K562 (cell line): ENCODE measurements at regions of chr6 and their contacts with region 1.

Region 1: DNA sequence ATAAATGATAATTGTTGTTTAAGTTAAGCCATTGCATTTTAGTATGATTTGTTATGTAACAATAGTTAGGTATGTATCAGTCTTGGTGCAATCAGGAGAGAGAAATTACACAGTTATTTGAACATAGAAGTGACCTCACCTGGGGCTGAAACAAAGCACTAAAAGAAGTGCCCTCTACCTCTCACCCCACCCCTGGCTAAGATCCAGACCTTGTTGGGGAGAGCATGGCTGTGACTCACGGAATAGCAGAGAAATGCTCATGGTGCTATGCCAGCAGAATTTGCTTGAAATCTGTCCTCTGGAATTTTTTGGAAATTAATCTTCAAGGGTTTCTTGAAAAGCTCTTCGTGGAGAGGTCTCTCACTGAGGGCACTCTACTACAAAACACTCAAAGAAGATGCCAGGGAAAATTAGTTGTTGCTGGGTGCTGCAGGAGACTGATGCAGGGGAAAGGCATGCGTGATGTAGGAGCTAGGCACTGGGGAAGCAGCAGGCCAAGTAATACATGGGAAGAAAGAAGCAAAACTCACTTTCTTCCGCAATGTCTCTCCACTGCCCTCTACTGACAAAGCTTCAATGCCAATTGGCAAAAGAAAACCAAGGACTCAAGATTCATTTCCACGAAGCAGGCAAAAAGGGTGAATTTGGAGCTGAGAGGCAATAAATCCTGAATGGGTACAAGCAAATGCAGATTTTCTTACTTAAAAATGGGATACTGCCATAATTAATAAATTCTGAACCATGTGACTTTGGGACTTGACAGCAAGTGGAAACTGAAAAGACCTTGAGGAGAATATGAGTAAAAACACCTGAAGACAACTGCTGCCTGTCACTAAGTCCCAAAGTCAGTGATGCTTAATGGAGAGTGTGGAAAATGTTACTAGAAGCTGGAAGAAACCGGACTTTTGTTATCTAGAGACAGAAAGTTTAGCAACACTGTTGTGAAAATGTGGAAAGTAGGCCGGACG is 136.3 kb upstream of the ZNF184 start:
- DNase-seq: peak in 3 of 4 experiments; percentile 34 to 86 (median 56)
- ATAC-seq: peak; percentile 62
- H3K4me3 ChIP-seq: no peak overlapping the region
- H3K27ac ChIP-seq: no peak overlapping the region
- H3K4me1 ChIP-seq: peaks cover 1 to 13% of the 10 kb centered on the region in 2 experiments; a peak in 4 of 5 replicates
- H3K27me3 ChIP-seq: no peaks in the 10 kb centered on the region
- CTCF ChIP-seq: peak; percentile 80 to 95 (median 88)
- EP300 ChIP-seq: peak; percentile 30; the same call in 1 of the 2 replicates
- POLR2A ChIP-seq: no peak
- RAD21 ChIP-seq: peak; percentile 81 to 92

Region 2: GRCh38 chr6:27188885-27189418 is 420.2 kb before region 1 on chr6:
- CTCF ChIA-PET with region 1: no interaction called
- POLR2A ChIA-PET with region 1: no interaction called
- in situ Hi-C with region 1: no loop called
- intact Hi-C with region 1: loop called (anchors 2 kb)
- DNase-seq: peak; percentile 69 to 93 (median 78)
- ATAC-seq: peak; percentile 85
- H3K4me3 ChIP-seq: peak overlapping the region; percentile 56
- H3K27ac ChIP-seq: peak overlapping the region; percentile 80
- H3K4me1 ChIP-seq: peaks cover 8% of the 10 kb centered on the region in 2 experiments; a peak in 4 of 5 replicates
- H3K27me3 ChIP-seq: no peaks in the 10 kb centered on the region
- CTCF ChIP-seq: peak; percentile 78 to 92 (median 85)
- EP300 ChIP-seq: no peak; the same call in 1 of the 2 replicates
- POLR2A ChIP-seq: no peak
- RAD21 ChIP-seq: peak; percentile 93 to 95

Region 3: GRCh38 chr6:27479319-27480182 is 129.6 kb before region 1 on chr6:
- CTCF ChIA-PET with region 1: no interaction called
- POLR2A ChIA-PET with region 1: no interaction called
- in situ Hi-C with region 1: no loop called
- intact Hi-C with region 1: loop called (anchors 5 kb)
- DNase-seq: peak; percentile 57 to 89 (median 66)
- ATAC-seq: peak; percentile 76
- H3K4me3 ChIP-seq: peak overlapping the region; percentile 64
- H3K27ac ChIP-seq: peak overlapping the region; percentile 85
- H3K4me1 ChIP-seq: peaks cover 4 to 8% of the 10 kb centered on the region in 2 experiments; a peak in 2 of 5 replicates
- H3K27me3 ChIP-seq: no peaks in the 10 kb centered on the region
- CTCF ChIP-seq: 0 out of 6 replicates have a peak, but pooled peaks of 1 of the 3 experiments have one; percentile 5
- EP300 ChIP-seq: peak; percentile 34
- POLR2A ChIP-seq: peak; percentile 54; the same call in 1 of the 2 replicates
- RAD21 ChIP-seq: no peak; a peak in 2 of 4 replicates

Region 4: DNA sequence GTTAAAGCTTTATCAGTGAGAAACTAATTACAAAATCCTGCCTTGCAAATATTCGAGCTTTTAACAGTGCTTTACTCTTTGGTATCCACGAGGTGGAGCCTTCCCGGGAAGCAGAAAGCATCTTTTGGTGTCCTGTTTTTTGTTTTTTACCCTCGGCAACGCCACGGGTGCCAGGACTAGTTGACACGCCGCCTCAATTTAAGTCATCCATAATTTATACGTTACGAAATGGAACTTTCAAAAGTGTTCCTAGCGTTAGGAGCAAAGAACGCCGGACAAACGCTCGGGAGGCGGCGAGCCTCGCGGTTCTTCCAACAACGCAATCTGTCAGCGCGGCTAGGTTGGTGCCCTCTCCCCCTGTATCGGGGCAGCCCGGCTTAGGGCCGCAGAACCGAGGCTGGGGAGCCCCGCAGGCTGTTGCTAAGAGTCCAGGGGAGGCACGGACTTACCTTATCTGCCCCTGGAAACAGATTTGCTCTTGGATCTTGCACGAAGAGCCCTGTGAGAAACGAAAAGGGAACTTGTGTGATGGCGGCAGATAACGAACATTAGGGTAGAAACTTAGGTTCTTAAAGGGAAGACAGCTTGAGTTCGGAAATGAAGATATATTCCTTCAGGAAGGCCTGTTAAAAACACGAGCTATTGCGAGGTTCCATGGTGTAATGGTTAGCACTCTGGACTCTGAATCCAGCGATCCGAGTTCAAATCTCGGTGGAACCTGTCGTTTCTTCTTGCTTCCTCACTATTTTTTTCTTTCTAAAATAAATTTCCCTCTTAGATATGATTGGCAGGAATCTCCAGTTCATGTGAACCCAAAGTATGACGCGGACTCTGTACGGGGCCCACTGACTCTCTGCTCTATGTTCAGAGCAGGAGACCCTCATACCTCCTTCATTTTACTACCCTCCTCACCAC is 90.1 kb before region 1 on chr6:
- CTCF ChIA-PET with region 1: interaction called, 12 read pairs
- POLR2A ChIA-PET with region 1: interaction called, 8 read pairs
- in situ Hi-C with region 1: loop called (anchors 5 kb)
- intact Hi-C with region 1: no loop called
- DNase-seq: peak; percentile 66 to 93 (median 69)
- ATAC-seq: peak; percentile 89
- H3K4me3 ChIP-seq: peak overlapping the region; percentile 69
- H3K27ac ChIP-seq: peak overlapping the region; percentile 82
- H3K4me1 ChIP-seq: peaks cover 4 to 7% of the 10 kb centered on the region in 2 experiments; a peak in 3 of 5 replicates
- H3K27me3 ChIP-seq: no peaks in the 10 kb centered on the region
- CTCF ChIP-seq: peak; percentile 77 to 90 (median 86)
- EP300 ChIP-seq: peak; percentile 63
- POLR2A ChIP-seq: peak; percentile 66
- RAD21 ChIP-seq: peak; percentile 76 to 80

Region 5: GRCh38 chr6:27553123-27553904 is 55.9 kb before region 1 on chr6:
- CTCF ChIA-PET with region 1: no interaction called
- POLR2A ChIA-PET with region 1: interaction called, 11 read pairs
- in situ Hi-C with region 1: no loop called
- intact Hi-C with region 1: no loop called
- DNase-seq: peak; percentile 69 to 94 (median 77)
- ATAC-seq: peak; percentile 83
- H3K4me3 ChIP-seq: peak overlapping the region; percentile 52
- H3K27ac ChIP-seq: peak overlapping the region; percentile 93
- H3K4me1 ChIP-seq: 0 out of 5 replicates have a peak, but pooled peaks cover 0 to 11% of the 10 kb centered on the region in 2 experiments
- H3K27me3 ChIP-seq: no peaks in the 10 kb centered on the region
- CTCF ChIP-seq: 0 out of 6 replicates have a peak, but pooled peaks of 1 of the 3 experiments have one; percentile 1
- EP300 ChIP-seq: peak; percentile 79
- POLR2A ChIP-seq: no peak
- RAD21 ChIP-seq: peak; percentile 16 to 27; a peak in 1 of 4 replicates

Region 6: GRCh38 chr6:27630727-27631608 is 21.8 kb after region 1 on chr6:
- CTCF ChIA-PET with region 1: no interaction called
- POLR2A ChIA-PET with region 1: interaction called, 11 read pairs
- in situ Hi-C with region 1: no loop called
- intact Hi-C with region 1: no loop called
- DNase-seq: peak; percentile 79 to 94 (median 83)
- ATAC-seq: peak; percentile 99
- H3K4me3 ChIP-seq: peak overlapping the region; percentile 57
- H3K27ac ChIP-seq: peak overlapping the region; percentile 71
- H3K4me1 ChIP-seq: peaks cover 8 to 10% of the 10 kb centered on the region in 2 experiments; a peak in 4 of 5 replicates
- H3K27me3 ChIP-seq: no peaks in the 10 kb centered on the region
- CTCF ChIP-seq: peak; percentile 55 to 64 (median 63); a peak in 5 of 6 replicates
- EP300 ChIP-seq: peak; percentile 76
- POLR2A ChIP-seq: no peak
- RAD21 ChIP-seq: 0 out of 4 replicates have a peak, but pooled peaks have one; percentile 2 to 14

Region 7: GRCh38 chr6:28371706-28372451 is 762.7 kb after region 1 on chr6:
- CTCF ChIA-PET with region 1: no interaction called
- POLR2A ChIA-PET with region 1: no interaction called
- in situ Hi-C with region 1: no loop called
- intact Hi-C with region 1: no loop called
- DNase-seq: peak in 2 of 4 experiments; percentile 34 to 58
- ATAC-seq: peak; percentile 71
- H3K4me3 ChIP-seq: no peak overlapping the region
- H3K27ac ChIP-seq: no peak overlapping the region
- H3K4me1 ChIP-seq: peaks cover 3 to 14% of the 10 kb centered on the region in 2 experiments; a peak in 3 of 5 replicates
- H3K27me3 ChIP-seq: no peaks in the 10 kb centered on the region
- CTCF ChIP-seq: no peak
- EP300 ChIP-seq: no peak
- POLR2A ChIP-seq: no peak
- RAD21 ChIP-seq: no peak